HEK293 (cell line): ENCODE measurements at regions of chr1 and their contacts with region 1.

Region 1: GRCh38 chr1:204806943-204807687 is 63.5 kb upstream of the NFASC start:
- H3K4me3 ChIP-seq: peak overlapping the region; percentile 62
- H3K27ac ChIP-seq: no peak overlapping the region
- H3K4me1 ChIP-seq: no peaks in the 10 kb centered on the region
- CTCF ChIP-seq: peak; percentile 99

Region 2: GRCh38 chr1:204465546-204466415 is 341.3 kb before region 1 on chr1:
- CTCF ChIA-PET with region 1: no interaction called
- POLR2A ChIA-PET with region 1: no interaction called
- H3K4me3 ChIP-seq: no peak overlapping the region
- H3K27ac ChIP-seq: no peak overlapping the region
- H3K4me1 ChIP-seq: no peaks in the 10 kb centered on the region
- CTCF ChIP-seq: no peak

Region 3: DNA sequence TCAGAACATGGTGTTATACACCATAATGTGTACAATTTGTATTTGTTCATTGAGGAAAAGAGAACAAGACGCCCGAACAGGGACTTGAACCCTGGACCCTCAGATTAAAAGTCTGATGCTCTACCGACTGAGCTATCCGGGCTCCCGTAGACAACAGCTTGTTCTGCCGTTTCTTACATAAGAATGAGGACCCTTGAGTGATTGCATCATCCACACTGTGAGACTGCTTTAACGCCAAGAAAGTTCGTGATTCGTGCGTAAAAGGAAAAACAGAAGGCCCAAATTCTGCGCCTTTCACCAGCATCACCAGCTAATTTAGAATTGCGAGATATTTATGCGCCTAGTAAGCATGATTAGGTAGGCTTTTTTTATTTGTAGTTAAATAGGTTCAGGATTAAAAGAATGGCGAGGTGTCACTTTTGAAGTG is 300.1 kb before region 1 on chr1:
- CTCF ChIA-PET with region 1: interaction called, 19 read pairs
- POLR2A ChIA-PET with region 1: no interaction called
- H3K4me3 ChIP-seq: peak overlapping the region; percentile 58
- H3K27ac ChIP-seq: peak overlapping the region; percentile 78
- H3K4me1 ChIP-seq: no peaks in the 10 kb centered on the region
- CTCF ChIP-seq: no peak

Region 4: GRCh38 chr1:204565617-204566582 is 241.2 kb before region 1 on chr1:
- CTCF ChIA-PET with region 1: interaction called, 401 read pairs
- POLR2A ChIA-PET with region 1: no interaction called
- H3K4me3 ChIP-seq: no peak overlapping the region
- H3K27ac ChIP-seq: no peak overlapping the region
- H3K4me1 ChIP-seq: no peaks in the 10 kb centered on the region
- CTCF ChIP-seq: 0 out of 2 replicates have a peak, but pooled peaks have one; percentile 47

Region 5: GRCh38 chr1:204685236-204686006 is 121.7 kb before region 1 on chr1 and contains the start of gene LRRN2:
- CTCF ChIA-PET with region 1: interaction called, 18 read pairs
- POLR2A ChIA-PET with region 1: no interaction called
- H3K4me3 ChIP-seq: peak within 1 kb of the TSS; percentile 31
- H3K27ac ChIP-seq: peak within 1 kb of the TSS; percentile 33; the same call in 1 of the 2 replicates
- H3K4me1 ChIP-seq: no peaks in the 10 kb centered on the region
- CTCF ChIP-seq: no peak

Region 6: GRCh38 chr1:204738506-204738905 is 68.6 kb before region 1 on chr1:
- CTCF ChIA-PET with region 1: no interaction called
- POLR2A ChIA-PET with region 1: no interaction called
- H3K4me3 ChIP-seq: no peak overlapping the region
- H3K27ac ChIP-seq: no peak overlapping the region
- H3K4me1 ChIP-seq: no peaks in the 10 kb centered on the region
- CTCF ChIP-seq: no peak

Region 7: GRCh38 chr1:204828338-204828850 is 21.3 kb after region 1 on chr1:
- CTCF ChIA-PET with region 1: interaction called, 181 read pairs
- POLR2A ChIA-PET with region 1: no interaction called
- H3K4me3 ChIP-seq: peak overlapping the region; percentile 41
- H3K27ac ChIP-seq: no peak overlapping the region
- H3K4me1 ChIP-seq: no peaks in the 10 kb centered on the region
- CTCF ChIP-seq: no peak

Region 8: DNA sequence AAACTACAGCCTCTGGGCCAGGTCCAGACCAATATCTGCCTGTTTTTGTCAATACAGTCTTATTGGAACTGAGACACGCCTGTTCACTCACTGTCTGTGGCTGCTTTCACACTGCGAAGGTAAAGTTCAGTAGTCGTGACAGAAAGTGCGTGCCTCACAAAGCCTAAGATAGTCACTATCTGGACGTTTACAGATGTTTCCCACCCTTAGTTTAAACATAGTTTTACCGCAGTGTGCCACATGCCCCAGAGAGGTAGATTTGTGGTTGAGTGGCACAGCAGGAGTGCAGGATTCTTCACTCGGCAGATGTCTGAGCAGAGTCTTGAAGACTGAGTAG is 125.4 kb after region 1 on chr1:
- CTCF ChIA-PET with region 1: interaction called, 179 read pairs
- POLR2A ChIA-PET with region 1: no interaction called
- H3K4me3 ChIP-seq: no peak overlapping the region
- H3K27ac ChIP-seq: no peak overlapping the region
- H3K4me1 ChIP-seq: no peaks in the 10 kb centered on the region
- CTCF ChIP-seq: no peak

Region 9: DNA sequence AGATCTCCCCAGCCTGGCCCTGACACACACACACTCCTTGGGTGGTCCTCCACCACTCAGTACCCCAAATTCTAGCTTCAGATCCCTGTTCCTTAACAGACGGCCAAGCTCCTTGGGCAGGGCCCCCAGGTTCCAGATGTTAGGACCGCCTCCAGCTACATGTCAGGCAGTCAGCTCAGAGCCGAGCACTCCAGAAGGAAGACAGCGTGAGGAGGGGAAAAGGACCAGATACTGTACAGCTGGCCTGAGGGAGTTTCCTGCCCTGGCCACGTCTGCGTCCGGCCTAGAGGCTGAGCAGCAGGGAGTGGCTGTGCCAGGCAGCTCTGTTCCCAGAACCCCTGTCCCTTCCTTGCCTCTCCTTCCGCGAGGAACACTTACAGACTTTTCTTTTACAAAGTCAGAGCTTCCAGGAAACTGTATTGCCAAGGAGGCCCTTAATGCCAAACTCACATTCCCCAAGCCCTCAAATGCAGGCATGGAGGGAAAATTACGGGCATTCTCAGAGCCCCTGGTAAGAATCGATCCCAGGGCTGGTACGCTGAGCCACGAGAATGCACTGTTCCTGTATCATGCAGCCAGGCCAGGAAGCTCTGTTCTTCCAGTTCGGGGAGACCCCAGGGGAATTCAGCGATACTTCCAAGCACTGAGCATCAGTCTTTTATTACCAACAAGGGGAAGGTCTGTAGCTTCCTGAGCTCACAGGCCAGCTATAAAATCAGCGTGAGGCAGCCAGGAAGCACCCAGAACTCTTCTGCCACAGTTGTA is 190.7 kb after region 1 on chr1:
- CTCF ChIA-PET with region 1: no interaction called
- POLR2A ChIA-PET with region 1: no interaction called
- H3K4me3 ChIP-seq: no peak overlapping the region
- H3K27ac ChIP-seq: no peak overlapping the region
- H3K4me1 ChIP-seq: no peaks in the 10 kb centered on the region
- CTCF ChIP-seq: no peak

Region 10: DNA sequence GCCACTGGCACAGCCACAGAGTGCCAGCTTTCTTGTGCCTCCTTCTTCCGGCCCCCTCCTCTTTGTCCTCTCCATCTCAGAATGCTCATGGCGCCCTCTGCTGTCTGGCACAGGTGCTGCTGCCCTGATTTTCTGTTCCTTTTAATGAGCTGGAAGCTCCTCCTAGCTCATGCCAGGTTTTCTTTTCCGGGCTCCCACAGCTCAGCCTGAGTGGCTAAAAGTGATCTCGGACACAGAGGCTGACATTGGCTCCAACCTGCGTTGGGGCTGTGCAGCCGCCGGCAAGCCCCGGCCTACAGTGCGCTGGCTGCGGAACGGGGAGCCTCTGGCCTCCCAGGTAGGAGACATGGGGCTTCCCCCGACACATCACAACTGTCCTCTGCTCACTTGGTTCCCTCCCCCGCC is 254.6 kb after region 1 on chr1:
- CTCF ChIA-PET with region 1: interaction called, 24 read pairs
- POLR2A ChIA-PET with region 1: no interaction called
- H3K4me3 ChIP-seq: no peak overlapping the region
- H3K27ac ChIP-seq: no peak overlapping the region
- H3K4me1 ChIP-seq: no peaks in the 10 kb centered on the region
- CTCF ChIP-seq: peak; percentile 82